Ascending aorta (tissue), 2 donors: ENCODE measurements at regions of chr1 and their contacts with region 1.

Region 1: GRCh38 chr1:44327679-44328491 is 27.2 kb downstream of the ERI3 start:
- DNase-seq: peak; percentile 61 to 98
- H3K4me3 ChIP-seq: no peak overlapping the region
- H3K27ac ChIP-seq: peak overlapping the region; percentile 58 to 66
- H3K4me1 ChIP-seq: peaks cover 0 to 18% of the 10 kb centered on the region in 2 donors
- H3K27me3 ChIP-seq: no peaks in the 10 kb centered on the region
- CTCF ChIP-seq: no peak

Region 2: GRCh38 chr1:44347280-44347679 is 19.4 kb after region 1 on chr1:
- intact Hi-C with region 1: loop called (anchors 1 kb)
- DNase-seq: peak in 1 of 2 donors; percentile 73
- H3K4me3 ChIP-seq: no peak overlapping the region
- H3K27ac ChIP-seq: peak overlapping the region; percentile 84
- H3K4me1 ChIP-seq: peaks cover 9 to 25% of the 10 kb centered on the region in 2 donors
- H3K27me3 ChIP-seq: no peaks in the 10 kb centered on the region
- CTCF ChIP-seq: peak in 1 of 3 experiments; percentile 12

Region 3: GRCh38 chr1:44354840-44355581 is 27.1 kb after region 1 on chr1 and contains the start of gene ERI3:
- intact Hi-C with region 1: loop called (anchors 2 kb)
- DNase-seq: peak; percentile 96 to 99
- H3K4me3 ChIP-seq: peak within 1 kb of the TSS; percentile 95 to 98
- H3K27ac ChIP-seq: peak within 1 kb of the TSS; percentile 68 to 90
- H3K4me1 ChIP-seq: peaks cover 8 to 14% of the 10 kb centered on the region in 2 donors
- H3K27me3 ChIP-seq: no peaks in the 10 kb centered on the region
- CTCF ChIP-seq: no peak
- total RNA-seq, gene ERI3: 69.3 TPM

Region 4: GRCh38 chr1:44423591-44424537 is 96.0 kb after region 1 on chr1:
- intact Hi-C with region 1: loop called (anchors 5 kb)
- DNase-seq: peak in 1 of 2 donors; percentile 90
- H3K4me3 ChIP-seq: peak overlapping the region in 1 of 2 donors; percentile 39
- H3K27ac ChIP-seq: peak overlapping the region; percentile 31 to 45
- H3K4me1 ChIP-seq: peaks cover 5 to 8% of the 10 kb centered on the region in 2 donors
- H3K27me3 ChIP-seq: peaks cover 6% of the 10 kb centered on the region
- CTCF ChIP-seq: peak in 1 of 3 experiments; percentile 3